AG04449 (cell line): ENCODE measurements at regions of chr12 and their contacts with region 1.

Region 1: GRCh38 chr12:77010691-77011548 is 54.4 kb downstream of the E2F7 start:
- DNase-seq: peak; percentile 12
- H3K4me3 ChIP-seq: no peak overlapping the region
- CTCF ChIP-seq: peak; percentile 93

Region 2: GRCh38 chr12:76790564-76791552 is 220.1 kb before region 1 on chr12:
- CTCF ChIA-PET with region 1: interaction called, 12 read pairs
- POLR2A ChIA-PET with region 1: no interaction called
- DNase-seq: no peak
- H3K4me3 ChIP-seq: no peak overlapping the region
- CTCF ChIP-seq: no peak

Region 3: DNA sequence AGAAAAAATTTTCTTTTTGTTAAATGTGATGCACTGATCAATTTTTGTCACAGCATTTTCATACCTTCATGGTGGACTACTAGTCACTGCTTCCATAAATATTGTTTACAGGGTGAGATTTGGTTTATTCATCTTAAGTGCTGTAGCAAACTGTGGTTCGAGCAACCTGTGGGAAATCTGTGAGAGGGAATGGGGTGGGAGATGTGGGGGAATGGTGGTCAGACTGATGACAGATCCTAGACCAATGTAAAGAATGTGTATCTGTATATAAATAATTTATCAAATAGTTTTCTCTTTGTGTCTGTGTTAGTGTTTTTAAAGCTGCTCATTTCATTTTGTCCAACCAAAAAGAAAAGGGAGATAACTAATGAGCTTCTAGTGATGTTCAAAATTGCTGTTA is 158.8 kb before region 1 on chr12:
- CTCF ChIA-PET with region 1: interaction called, 18 read pairs
- POLR2A ChIA-PET with region 1: no interaction called
- DNase-seq: no peak
- H3K4me3 ChIP-seq: no peak overlapping the region
- CTCF ChIP-seq: no peak

Region 4: DNA sequence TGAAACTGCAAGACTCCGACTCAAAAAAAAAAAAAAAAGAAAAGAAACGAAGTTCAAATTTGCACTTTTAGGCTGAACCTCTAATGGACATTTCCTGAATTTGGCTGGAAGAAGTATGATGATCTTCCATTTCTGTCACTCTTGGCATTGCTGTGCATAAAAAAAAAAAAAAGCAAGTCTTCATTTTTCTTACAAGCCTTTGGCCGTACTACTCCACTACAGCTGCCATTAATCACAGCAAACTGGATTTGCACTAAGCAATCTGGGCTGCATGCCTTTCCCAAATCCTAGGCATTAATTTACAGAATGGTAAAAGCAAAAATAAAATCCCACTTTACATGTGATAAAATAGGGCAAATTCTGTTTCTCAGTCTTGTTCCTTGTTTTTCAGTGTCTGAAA is 139.2 kb before region 1 on chr12:
- CTCF ChIA-PET with region 1: interaction called, 24 read pairs
- POLR2A ChIA-PET with region 1: interaction called, 4 read pairs
- DNase-seq: no peak
- H3K4me3 ChIP-seq: no peak overlapping the region
- CTCF ChIP-seq: no peak

Region 5: GRCh38 chr12:76952995-76953394 is 57.9 kb before region 1 on chr12:
- CTCF ChIA-PET with region 1: interaction called, 22 read pairs
- POLR2A ChIA-PET with region 1: interaction called, 5 read pairs
- DNase-seq: no peak
- H3K4me3 ChIP-seq: no peak overlapping the region
- CTCF ChIP-seq: no peak

Region 6: DNA sequence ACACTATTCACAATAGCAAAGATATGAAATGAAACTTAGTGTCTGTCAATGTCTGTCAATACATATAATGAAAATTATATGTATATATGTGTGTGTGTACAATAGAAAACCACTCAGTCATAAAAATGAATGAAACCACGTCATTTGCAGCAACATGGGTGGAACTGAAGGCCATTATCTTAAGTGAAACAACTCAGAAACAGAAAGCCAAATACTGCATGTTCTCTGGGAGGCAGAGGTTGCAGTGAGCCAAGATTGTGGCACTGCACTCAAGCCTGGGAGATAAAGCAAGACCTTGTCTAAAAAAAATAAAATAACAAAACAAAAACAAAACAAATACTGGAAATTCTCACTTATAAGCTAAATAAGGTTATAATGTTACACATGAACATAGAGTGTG is 71.1 kb after region 1 on chr12:
- CTCF ChIA-PET with region 1: no interaction called
- POLR2A ChIA-PET with region 1: no interaction called
- DNase-seq: no peak
- H3K4me3 ChIP-seq: no peak overlapping the region
- CTCF ChIP-seq: no peak

Region 7: GRCh38 chr12:77152623-77153193 is 141.8 kb after region 1 on chr12:
- CTCF ChIA-PET with region 1: no interaction called
- POLR2A ChIA-PET with region 1: no interaction called
- DNase-seq: no peak
- H3K4me3 ChIP-seq: no peak overlapping the region
- CTCF ChIP-seq: peak; percentile 55